Vagina (tissue), 2 donors: ENCODE measurements at regions of chr3 and their contacts with region 1.

Region 1: GRCh38 chr3:184604039-184604601 is 42.5 kb downstream of the EPHB3 start:
- DNase-seq: no peak
- H3K4me3 ChIP-seq: peak overlapping the region; percentile 39 to 46
- H3K27ac ChIP-seq: peak overlapping the region; percentile 22
- H3K4me1 ChIP-seq: peaks cover 35% of the 10 kb centered on the region
- H3K27me3 ChIP-seq: no peaks in the 10 kb centered on the region
- CTCF ChIP-seq: no peak
- POLR2A ChIP-seq: no peak

Region 2: DNA sequence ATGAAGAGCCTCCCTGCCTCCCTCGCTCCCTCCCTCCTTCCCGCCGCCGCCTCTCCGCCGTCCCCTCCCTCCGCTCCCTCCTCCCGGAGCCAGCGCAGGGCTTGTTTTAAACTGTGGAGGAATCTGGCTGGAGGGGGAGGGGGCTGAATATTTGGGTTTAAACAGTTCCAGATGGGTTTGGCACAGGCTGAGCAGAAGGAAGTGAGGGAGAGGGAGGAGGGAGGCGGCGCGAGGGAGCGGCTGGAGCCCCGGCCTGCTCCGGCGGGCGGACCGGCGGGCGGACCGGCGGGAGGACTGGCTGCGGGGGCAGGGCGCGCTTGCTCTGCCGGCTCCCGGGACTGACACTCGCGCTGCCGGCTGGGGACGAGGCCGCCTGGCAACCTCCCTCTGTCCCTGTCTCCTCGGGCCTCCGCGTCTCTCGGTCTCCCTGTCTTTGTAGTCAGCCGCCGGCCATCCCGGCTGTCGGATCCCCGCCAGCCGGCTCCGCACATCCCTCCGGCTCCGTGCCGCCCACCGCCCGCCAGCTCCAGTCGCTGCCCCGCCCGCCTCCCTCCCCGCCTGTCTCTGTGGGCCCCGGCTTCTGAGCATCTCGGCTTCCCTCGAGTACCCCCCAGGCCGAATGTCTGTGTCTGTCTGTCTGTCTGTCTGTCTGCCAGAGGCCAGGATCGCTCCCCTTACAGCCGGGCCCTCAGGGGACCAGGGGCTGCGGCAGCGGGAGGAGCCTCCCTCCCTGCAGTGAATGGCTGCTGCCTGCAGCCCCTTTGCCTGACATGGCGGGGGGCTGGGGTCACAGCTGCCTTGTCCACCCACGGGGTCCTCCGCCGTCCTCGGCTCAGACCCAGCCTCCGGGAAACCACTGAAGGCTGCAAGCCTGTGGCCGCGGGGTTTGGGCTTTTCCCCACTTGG is 34.9 kb before region 1 on chr3:
- intact Hi-C with region 1: loop called (anchors 5 kb)
- DNase-seq: no peak
- H3K4me3 ChIP-seq: peak overlapping the region; percentile 44 to 49
- H3K27ac ChIP-seq: peak overlapping the region; percentile 87
- H3K4me1 ChIP-seq: peaks cover 63% of the 10 kb centered on the region
- H3K27me3 ChIP-seq: no peaks in the 10 kb centered on the region
- CTCF ChIP-seq: no peak
- POLR2A ChIP-seq: no peak

Region 3: DNA sequence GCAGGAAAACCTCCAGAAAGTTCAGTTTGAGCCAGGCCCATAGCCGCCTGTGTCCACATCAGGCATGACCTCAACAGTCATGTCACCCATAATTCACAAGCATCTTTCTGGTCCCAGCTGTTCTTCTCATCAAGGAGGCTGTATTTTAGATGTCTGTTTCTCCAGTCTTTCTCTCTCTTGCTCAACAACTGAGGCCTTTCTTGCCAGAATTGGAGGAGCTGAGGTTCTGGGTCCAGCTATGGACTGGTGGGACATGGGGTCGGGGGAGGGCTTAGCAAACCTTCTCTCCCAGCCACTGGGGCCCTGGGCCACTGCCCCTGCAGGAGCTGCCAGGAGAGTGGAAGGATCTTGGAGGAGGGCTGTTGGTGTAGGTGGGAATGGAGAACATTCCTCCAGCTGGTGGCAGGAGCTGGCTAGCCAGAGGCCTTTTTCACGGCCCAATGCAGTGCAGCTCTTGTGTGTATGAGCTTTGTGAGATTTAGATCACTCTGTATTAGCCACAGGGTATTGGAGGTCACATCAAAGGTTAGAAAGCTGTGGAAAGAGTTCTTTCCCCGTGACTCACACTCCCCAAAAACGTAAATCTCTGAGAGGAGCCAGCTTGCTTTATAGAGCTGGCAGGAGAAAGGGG is 84.2 kb after region 1 on chr3:
- intact Hi-C with region 1: loop called (anchors 5 kb)
- DNase-seq: no peak
- H3K4me3 ChIP-seq: no peak overlapping the region
- H3K27ac ChIP-seq: peak overlapping the region; percentile 71
- H3K4me1 ChIP-seq: peaks cover 77% of the 10 kb centered on the region
- H3K27me3 ChIP-seq: no peaks in the 10 kb centered on the region
- CTCF ChIP-seq: no peak
- POLR2A ChIP-seq: no peak